ENCODE measurements at regions of chr4 and their contacts with region 1.

Region 1: GRCh38 chr4:86934771-86935565 is at the start of gene AFF1:
- DNase-seq: peak; percentile 88
- H3K4me3 Mint-ChIP-seq: peak within 1 kb of the TSS; percentile 91
- H3K27ac Mint-ChIP-seq: peak within 1 kb of the TSS; percentile 96
- H3K4me1 Mint-ChIP-seq: peaks cover 18% of the 10 kb centered on the region
- H3K27me3 Mint-ChIP-seq: no peaks in the 10 kb centered on the region
- CTCF ChIP-seq: no peak
- total RNA-seq, gene AFF1: 37.7 and 40.2 TPM in 2 replicates

Region 2: GRCh38 chr4:86757468-86757867 is 177.5 kb before region 1 on chr4:
- CTCF ChIA-PET with region 1: no interaction called
- intact Hi-C with region 1: no loop called
- DNase-seq: no peak
- H3K4me3 Mint-ChIP-seq: no peak overlapping the region
- H3K27ac Mint-ChIP-seq: no peak overlapping the region
- H3K4me1 Mint-ChIP-seq: no peaks in the 10 kb centered on the region
- H3K27me3 Mint-ChIP-seq: no peaks in the 10 kb centered on the region
- CTCF ChIP-seq: no peak

Region 3: GRCh38 chr4:86977621-86978184 is 42.7 kb after region 1 on chr4:
- CTCF ChIA-PET with region 1: interaction called, 4 read pairs
- intact Hi-C with region 1: loop called (anchors 2 kb)
- DNase-seq: peak; percentile 57
- H3K4me3 Mint-ChIP-seq: peak overlapping the region; percentile 43
- H3K27ac Mint-ChIP-seq: peak overlapping the region; percentile 76
- H3K4me1 Mint-ChIP-seq: peaks cover 44% of the 10 kb centered on the region
- H3K27me3 Mint-ChIP-seq: no peaks in the 10 kb centered on the region
- CTCF ChIP-seq: no peak

Region 4: DNA sequence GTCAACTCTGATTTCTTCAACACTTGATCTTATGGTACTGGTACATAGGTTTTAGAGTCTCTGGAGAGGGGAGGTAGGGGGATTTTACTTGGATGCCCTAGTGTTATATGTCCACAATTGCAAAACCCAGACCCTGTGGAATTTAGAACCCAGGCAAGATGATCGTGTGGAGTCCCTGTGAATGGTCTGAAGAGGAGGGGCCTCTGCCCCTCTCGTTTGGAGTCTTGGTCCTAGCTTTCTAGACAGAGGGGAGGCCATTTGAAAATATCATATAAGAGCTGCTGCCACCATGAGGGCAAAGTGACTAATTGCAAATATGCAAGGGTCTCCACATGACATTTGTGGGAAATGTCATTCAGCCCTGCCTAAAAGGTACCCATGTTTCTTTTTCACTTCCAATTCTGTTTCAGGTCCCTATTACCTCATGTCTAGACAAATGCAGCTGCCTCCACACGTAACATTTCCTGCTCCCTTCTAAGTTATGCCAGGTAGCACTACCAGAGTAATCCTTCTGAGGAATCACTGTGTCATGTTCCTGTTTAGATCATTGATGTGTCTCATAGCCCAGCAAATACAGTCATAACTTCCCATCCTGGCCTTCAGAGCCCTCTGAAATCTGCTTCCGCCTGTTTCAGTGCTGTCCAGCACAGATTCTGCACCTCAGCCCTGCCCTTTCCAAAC is 158.6 kb after region 1 on chr4:
- CTCF ChIA-PET with region 1: interaction called, 13 read pairs
- intact Hi-C with region 1: loop called (anchors 5 kb)
- DNase-seq: peak; percentile 25
- H3K4me3 Mint-ChIP-seq: no peak overlapping the region
- H3K27ac Mint-ChIP-seq: no peak overlapping the region
- H3K4me1 Mint-ChIP-seq: peaks cover 25% of the 10 kb centered on the region
- H3K27me3 Mint-ChIP-seq: no peaks in the 10 kb centered on the region
- CTCF ChIP-seq: peak; percentile 41

Measured in Calu3 (cell line).